ENCODE measurements at regions of chr16 and their contacts with region 1.

Region 1: DNA sequence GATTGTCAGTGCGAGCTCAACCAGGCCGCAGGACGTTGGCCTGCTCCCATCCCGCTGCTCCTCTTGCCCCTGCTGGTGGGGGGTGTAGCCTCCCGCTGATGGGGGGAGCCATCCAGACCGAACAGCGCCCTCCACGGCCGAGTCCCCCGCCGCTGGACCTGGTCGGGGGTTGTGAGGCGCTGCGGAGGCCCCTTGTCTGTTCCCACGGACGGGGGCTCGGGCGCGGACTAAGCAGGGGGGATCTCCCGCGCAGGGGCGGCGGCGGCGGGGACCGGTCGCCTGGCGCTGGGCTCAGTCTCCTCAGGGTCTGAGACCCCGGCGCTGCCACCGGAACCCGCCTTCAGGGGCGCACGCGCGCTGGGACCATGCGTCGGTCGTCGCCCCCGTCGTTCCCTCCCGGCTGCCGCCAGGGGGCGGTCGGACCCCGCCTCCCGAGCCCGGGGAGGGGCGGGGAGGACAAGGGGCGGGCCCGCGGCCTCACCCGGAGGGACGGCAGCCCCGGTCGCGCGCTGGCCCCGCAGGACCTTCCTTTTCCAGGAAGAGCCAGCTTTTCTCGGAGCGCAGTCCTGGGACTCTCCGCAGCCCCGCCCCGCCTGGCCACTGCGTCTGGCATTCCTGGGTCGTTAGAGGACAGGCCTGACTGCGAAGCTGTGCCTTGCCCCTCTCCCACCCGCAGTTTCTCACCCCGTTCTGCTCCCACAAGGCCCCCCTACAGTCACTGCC is 6.3 kb upstream of the IL32 start:
- DNase-seq: peak; percentile 74 to 95 (median 87)
- ATAC-seq: peak; percentile 87
- H3K4me3 ChIP-seq: peak overlapping the region; percentile 84 to 85
- H3K4me3 Mint-ChIP-seq: peak overlapping the region; percentile 86
- H3K27ac ChIP-seq: peak overlapping the region; percentile 60 to 86
- H3K27ac Mint-ChIP-seq: peak overlapping the region; percentile 86
- H3K4me1 ChIP-seq: peaks cover 45% of the 10 kb centered on the region
- H3K4me1 Mint-ChIP-seq: peaks cover 49% of the 10 kb centered on the region
- H3K27me3 ChIP-seq: no peaks in the 10 kb centered on the region
- H3K27me3 Mint-ChIP-seq: no peaks in the 10 kb centered on the region
- CTCF ChIP-seq: peak; percentile 88

Region 2: GRCh38 chr16:3038256-3038655 is 20.9 kb before region 1 on chr16:
- CTCF ChIA-PET with region 1: interaction called, 15 read pairs
- POLR2A ChIA-PET with region 1: interaction called, 5 read pairs
- intact Hi-C with region 1: no loop called
- DNase-seq: peak in 1 of 9 experiments; percentile 18
- ATAC-seq: no peak
- H3K4me3 ChIP-seq: no peak overlapping the region
- H3K4me3 Mint-ChIP-seq: no peak overlapping the region
- H3K27ac ChIP-seq: no peak overlapping the region
- H3K27ac Mint-ChIP-seq: no peak overlapping the region
- H3K4me1 ChIP-seq: peaks cover 9% of the 10 kb centered on the region
- H3K4me1 Mint-ChIP-seq: peaks cover 4% of the 10 kb centered on the region
- H3K27me3 ChIP-seq: peaks cover 48 to 59% of the 10 kb centered on the region in 2 experiments
- H3K27me3 Mint-ChIP-seq: peaks cover 56% of the 10 kb centered on the region
- CTCF ChIP-seq: no peak

Region 3: GRCh38 chr16:3094289-3095027 is 35.3 kb after region 1 on chr16:
- CTCF ChIA-PET with region 1: interaction called, 77 read pairs
- POLR2A ChIA-PET with region 1: interaction called, 4 read pairs
- intact Hi-C with region 1: loop called (anchors 1 kb)
- DNase-seq: peak in 6 of 9 experiments; percentile 19 to 80 (median 62)
- ATAC-seq: peak; percentile 61
- H3K4me3 ChIP-seq: no peak overlapping the region
- H3K4me3 Mint-ChIP-seq: no peak overlapping the region
- H3K27ac ChIP-seq: no peak overlapping the region
- H3K27ac Mint-ChIP-seq: peak overlapping the region; percentile 43
- H3K4me1 ChIP-seq: peaks cover 27% of the 10 kb centered on the region
- H3K4me1 Mint-ChIP-seq: peaks cover 38% of the 10 kb centered on the region
- H3K27me3 ChIP-seq: no peaks in the 10 kb centered on the region
- H3K27me3 Mint-ChIP-seq: no peaks in the 10 kb centered on the region
- CTCF ChIP-seq: peak; percentile 55

Region 4: GRCh38 chr16:3112058-3112880 is 53.1 kb after region 1 on chr16 and contains the start of gene ZNF205:
- CTCF ChIA-PET with region 1: interaction called, 11 read pairs
- POLR2A ChIA-PET with region 1: no interaction called
- intact Hi-C with region 1: no loop called
- DNase-seq: no peak
- ATAC-seq: no peak
- H3K4me3 ChIP-seq: no peak within 1 kb of the TSS
- H3K4me3 Mint-ChIP-seq: no peak within 1 kb of the TSS
- H3K27ac ChIP-seq: no peak within 1 kb of the TSS
- H3K27ac Mint-ChIP-seq: no peak within 1 kb of the TSS
- H3K4me1 ChIP-seq: peaks cover 3% of the 10 kb centered on the region
- H3K4me1 Mint-ChIP-seq: peaks cover 3% of the 10 kb centered on the region
- H3K27me3 ChIP-seq: no peaks in the 10 kb centered on the region
- H3K27me3 Mint-ChIP-seq: peaks cover 2% of the 10 kb centered on the region
- CTCF ChIP-seq: no peak
- total RNA-seq, gene ZNF205: not detected

Region 5: DNA sequence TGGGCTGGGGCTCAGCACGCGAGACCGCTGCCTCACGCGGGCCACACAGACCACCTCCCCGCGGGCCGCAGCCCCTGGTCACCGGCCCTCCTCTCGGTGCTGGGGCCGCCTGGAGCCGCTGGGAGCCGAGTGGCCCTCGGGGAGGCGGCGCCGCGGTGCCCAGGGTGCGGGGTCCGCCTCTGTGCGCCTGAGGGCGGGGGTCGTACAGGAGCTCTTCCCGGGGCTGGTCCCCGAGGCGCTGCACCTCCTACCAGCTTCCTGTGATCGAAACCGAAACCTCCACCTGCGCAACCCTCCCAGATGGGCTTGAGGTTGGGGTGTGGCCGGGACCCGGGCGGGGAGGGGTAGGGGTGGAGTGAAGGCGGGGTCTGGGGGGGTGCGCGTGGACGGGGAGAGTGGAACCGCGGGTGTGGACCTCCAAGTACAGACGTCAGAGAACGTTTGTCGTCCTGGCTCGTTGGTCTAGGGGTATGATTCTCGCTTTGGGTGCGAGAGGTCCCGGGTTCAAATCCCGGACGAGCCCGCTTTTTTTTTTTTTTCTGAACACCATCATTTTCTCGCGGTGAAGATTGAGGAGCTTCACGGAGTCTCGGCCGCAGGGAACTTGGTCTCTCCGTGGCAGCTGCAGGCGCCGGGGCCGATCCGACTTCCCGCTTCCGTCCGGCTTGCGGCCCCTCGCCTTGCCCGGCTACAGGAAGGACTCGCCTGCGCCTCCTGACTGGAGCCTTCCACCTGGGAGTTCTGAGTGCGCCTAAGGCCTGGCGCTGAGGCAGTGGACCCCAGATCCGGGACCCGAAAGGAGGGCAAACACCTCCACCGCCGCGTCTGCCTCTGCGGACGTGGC is 99.5 kb after region 1 on chr16:
- CTCF ChIA-PET with region 1: interaction called, 3 read pairs
- POLR2A ChIA-PET with region 1: interaction called, 4 read pairs
- intact Hi-C with region 1: loop called in 1 of 2 experiments (anchors 2 kb)
- DNase-seq: peak; percentile 91 to 98 (median 95)
- ATAC-seq: peak; percentile 91
- H3K4me3 ChIP-seq: peak overlapping the region; percentile 80 to 97
- H3K4me3 Mint-ChIP-seq: peak overlapping the region; percentile 90
- H3K27ac ChIP-seq: peak overlapping the region; percentile 70 to 78
- H3K27ac Mint-ChIP-seq: peak overlapping the region; percentile 94
- H3K4me1 ChIP-seq: peaks cover 23% of the 10 kb centered on the region
- H3K4me1 Mint-ChIP-seq: peaks cover 15% of the 10 kb centered on the region
- H3K27me3 ChIP-seq: no peaks in the 10 kb centered on the region
- H3K27me3 Mint-ChIP-seq: no peaks in the 10 kb centered on the region
- CTCF ChIP-seq: no peak

Region 6: DNA sequence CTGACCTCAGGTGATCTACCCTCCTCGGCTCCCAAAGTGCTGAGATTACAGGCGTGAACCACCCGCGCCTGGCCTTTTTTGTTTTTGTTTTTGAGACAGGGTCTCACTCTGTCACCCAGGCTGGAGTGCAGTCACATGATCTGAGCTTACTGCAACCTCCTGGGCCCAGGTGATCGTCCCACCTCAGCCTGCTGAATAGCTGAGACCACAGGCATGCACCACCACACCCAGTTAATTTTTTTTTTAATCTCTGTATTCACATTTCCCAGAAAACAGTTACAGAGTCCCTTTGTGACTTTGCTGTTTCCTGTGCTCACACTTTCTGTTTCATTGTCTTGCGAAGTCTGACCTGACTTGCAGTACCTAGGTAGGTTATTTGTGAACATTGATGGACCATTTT is 444.4 kb after region 1 on chr16:
- CTCF ChIA-PET with region 1: no interaction called
- POLR2A ChIA-PET with region 1: no interaction called
- intact Hi-C with region 1: loop called in 1 of 2 experiments (anchors 1 kb)
- DNase-seq: peak in 8 of 9 experiments; percentile 19 to 77 (median 64)
- ATAC-seq: peak; percentile 22
- H3K4me3 ChIP-seq: peak overlapping the region in 1 of 2 experiments; percentile 45
- H3K4me3 Mint-ChIP-seq: peak overlapping the region; percentile 71
- H3K27ac ChIP-seq: peak overlapping the region; percentile 50 to 71
- H3K27ac Mint-ChIP-seq: peak overlapping the region; percentile 96
- H3K4me1 ChIP-seq: peaks cover 59% of the 10 kb centered on the region
- H3K4me1 Mint-ChIP-seq: peaks cover 66% of the 10 kb centered on the region
- H3K27me3 ChIP-seq: no peaks in the 10 kb centered on the region
- H3K27me3 Mint-ChIP-seq: no peaks in the 10 kb centered on the region
- CTCF ChIP-seq: no peak

Measured in CD8-positive, alpha-beta T cell (primary cell).